Activated naive CD4-positive, alpha-beta T cell treated with anti-CD3 and anti-CD28 coated beads for 36 hours (primary cell): ENCODE measurements at regions of chr6 and their contacts with region 1.

Region 1: DNA sequence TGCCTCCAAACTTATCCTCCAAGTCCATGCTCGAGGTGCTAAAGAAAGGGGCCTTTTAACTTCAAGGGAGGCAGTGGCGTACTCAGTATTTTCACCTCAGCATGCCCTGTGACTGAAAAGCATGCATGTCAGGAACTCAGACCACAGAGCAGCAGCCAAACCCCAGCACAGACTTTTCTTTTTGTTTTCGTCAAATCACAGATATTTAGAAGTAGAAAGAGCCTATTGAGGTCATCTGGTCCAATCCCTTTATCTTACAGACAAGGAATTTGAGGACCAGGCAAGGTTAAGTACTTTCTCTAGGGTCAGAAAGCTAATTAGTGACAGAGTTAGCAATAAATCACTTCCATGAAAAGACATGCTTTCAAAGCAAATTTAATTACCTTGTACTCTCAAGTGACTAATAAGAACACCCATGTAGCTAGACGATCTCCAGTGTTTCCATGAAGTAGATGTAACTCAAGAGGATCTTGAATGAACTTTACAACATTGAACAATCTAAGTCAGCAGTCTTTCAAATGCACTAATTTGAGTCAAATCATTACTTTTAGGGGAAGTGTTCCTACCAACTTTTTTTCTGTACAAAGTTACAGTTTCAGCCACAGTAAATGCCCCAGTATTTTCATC is 35.9 kb downstream of the MOXD1 start:
- DNase-seq: peak; percentile 5
- H3K4me3 Mint-ChIP-seq: no peak overlapping the region
- H3K27ac Mint-ChIP-seq: no peak overlapping the region
- H3K4me1 Mint-ChIP-seq: peaks cover 17% of the 10 kb centered on the region
- H3K27me3 Mint-ChIP-seq: peaks cover 28% of the 10 kb centered on the region

Region 2: DNA sequence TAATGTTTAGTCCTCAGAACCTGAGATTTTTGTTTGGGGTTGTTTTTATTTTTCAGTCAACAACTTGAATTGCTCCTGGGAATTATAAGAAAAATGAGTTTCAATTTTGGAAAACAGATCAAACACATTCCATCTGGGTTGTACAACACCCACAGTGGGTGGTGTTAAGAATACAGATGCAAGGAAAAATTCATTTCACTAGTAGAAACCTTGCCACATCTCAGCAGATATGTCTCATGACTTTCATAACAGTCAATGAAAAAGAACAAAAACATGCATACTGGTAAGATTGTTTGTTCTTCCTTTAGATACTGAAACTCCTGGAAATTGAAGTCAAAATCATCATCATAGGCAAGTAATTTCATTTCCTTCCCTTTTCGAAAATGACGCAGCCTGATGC is 43.0 kb before region 1 on chr6:
- CTCF ChIA-PET with region 1: no interaction called
- intact Hi-C with region 1: loop called (anchors 2 kb)
- DNase-seq: no peak
- H3K4me3 Mint-ChIP-seq: no peak overlapping the region
- H3K27ac Mint-ChIP-seq: no peak overlapping the region
- H3K4me1 Mint-ChIP-seq: peaks cover 2% of the 10 kb centered on the region
- H3K27me3 Mint-ChIP-seq: peaks cover 24% of the 10 kb centered on the region

Region 3: DNA sequence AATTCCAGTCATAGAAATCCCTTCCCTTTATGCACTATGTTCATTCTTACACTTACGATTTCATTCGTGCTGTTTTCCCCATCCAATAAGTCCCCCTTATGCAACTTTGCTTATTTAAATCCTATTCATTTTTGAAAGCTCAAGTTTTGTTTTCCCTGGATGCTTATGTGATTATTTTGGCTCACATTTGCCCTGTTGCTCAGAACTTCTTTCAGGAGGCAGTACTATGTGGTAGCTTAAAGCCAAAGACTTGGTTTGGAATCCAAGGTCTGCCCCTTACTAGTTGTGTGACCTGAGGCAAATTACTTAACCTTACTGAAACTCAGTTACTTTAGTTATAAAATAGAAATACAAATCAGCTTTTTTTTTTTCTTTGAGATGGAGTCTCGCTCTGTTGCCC is 23.7 kb before region 1 on chr6:
- CTCF ChIA-PET with region 1: no interaction called
- intact Hi-C with region 1: no loop called
- DNase-seq: no peak
- H3K4me3 Mint-ChIP-seq: no peak overlapping the region
- H3K27ac Mint-ChIP-seq: no peak overlapping the region
- H3K4me1 Mint-ChIP-seq: no peaks in the 10 kb centered on the region
- H3K27me3 Mint-ChIP-seq: peaks cover 24% of the 10 kb centered on the region

Region 4: DNA sequence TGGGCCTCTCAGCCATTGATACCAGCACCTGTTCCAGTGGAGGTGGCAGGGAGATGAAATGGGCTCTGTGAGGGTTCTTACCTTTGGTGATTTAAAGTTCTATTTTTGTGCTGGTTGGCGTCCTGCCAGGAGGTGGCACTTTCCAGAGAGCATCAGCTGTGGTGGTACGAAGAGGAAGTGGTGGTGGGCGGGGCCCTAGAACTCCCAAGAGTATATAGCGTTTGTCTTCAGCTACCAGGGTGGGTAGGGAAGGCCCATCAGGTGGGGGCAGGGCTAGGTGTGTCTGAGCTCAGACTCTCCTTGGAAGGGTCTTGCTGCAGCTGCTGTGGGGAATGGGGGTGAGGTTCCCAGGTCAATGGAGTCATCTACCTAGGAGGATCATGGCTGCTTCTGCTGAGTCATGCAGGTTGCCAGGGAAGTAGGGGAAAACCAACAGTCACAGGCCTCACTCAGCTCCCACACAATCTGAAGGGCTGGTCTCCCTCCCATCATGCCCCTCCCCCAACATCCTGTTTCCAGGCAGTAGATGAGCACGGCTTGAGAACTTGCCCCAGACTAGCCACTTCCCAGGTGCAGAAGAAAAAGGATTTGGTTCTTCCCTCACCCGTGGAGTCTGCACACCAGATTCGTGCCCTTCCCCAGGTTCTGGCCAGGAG is 10.8 kb before region 1 on chr6:
- CTCF ChIA-PET with region 1: no interaction called
- intact Hi-C with region 1: loop called (anchors 1 kb)
- DNase-seq: peak; percentile 58
- H3K4me3 Mint-ChIP-seq: no peak overlapping the region
- H3K27ac Mint-ChIP-seq: peak overlapping the region; percentile 19
- H3K4me1 Mint-ChIP-seq: peaks cover 12% of the 10 kb centered on the region
- H3K27me3 Mint-ChIP-seq: peaks cover 20% of the 10 kb centered on the region

Region 5: GRCh38 chr6:132401120-132401945 is 35.9 kb after region 1 on chr6 and contains the start of gene MOXD1:
- CTCF ChIA-PET with region 1: interaction called, 3 read pairs
- intact Hi-C with region 1: loop called (anchors 1 kb)
- DNase-seq: peak; percentile 5
- H3K4me3 Mint-ChIP-seq: peak within 1 kb of the TSS; percentile 41
- H3K27ac Mint-ChIP-seq: no peak within 1 kb of the TSS
- H3K4me1 Mint-ChIP-seq: peaks cover 18% of the 10 kb centered on the region
- H3K27me3 Mint-ChIP-seq: peaks cover 54% of the 10 kb centered on the region
- total RNA-seq, gene MOXD1: not detected